ENCODE measurements at regions of chr7 and their contacts with region 1.

Region 1: GRCh38 chr7:5514440-5515035 is 90.9 kb upstream of the TNRC18 start:
- DNase-seq: no peak
- ATAC-seq: no peak
- H3K4me3 ChIP-seq: peak overlapping the region in 1 of 2 donors; percentile 98
- H3K4me3 Mint-ChIP-seq: peak overlapping the region; percentile 95 to 99 (median 99)
- H3K27ac ChIP-seq: peak overlapping the region; percentile 80
- H3K27ac Mint-ChIP-seq: peak overlapping the region; percentile 22 to 98
- H3K4me1 ChIP-seq: peaks cover 5 to 22% of the 10 kb centered on the region in 2 experiments
- H3K4me1 Mint-ChIP-seq: peaks cover 16 to 24% (median 21%) of the 10 kb centered on the region in 3 donors
- H3K27me3 ChIP-seq: no peaks in the 10 kb centered on the region
- H3K27me3 Mint-ChIP-seq: no peaks in the 10 kb centered on the region

Region 2: DNA sequence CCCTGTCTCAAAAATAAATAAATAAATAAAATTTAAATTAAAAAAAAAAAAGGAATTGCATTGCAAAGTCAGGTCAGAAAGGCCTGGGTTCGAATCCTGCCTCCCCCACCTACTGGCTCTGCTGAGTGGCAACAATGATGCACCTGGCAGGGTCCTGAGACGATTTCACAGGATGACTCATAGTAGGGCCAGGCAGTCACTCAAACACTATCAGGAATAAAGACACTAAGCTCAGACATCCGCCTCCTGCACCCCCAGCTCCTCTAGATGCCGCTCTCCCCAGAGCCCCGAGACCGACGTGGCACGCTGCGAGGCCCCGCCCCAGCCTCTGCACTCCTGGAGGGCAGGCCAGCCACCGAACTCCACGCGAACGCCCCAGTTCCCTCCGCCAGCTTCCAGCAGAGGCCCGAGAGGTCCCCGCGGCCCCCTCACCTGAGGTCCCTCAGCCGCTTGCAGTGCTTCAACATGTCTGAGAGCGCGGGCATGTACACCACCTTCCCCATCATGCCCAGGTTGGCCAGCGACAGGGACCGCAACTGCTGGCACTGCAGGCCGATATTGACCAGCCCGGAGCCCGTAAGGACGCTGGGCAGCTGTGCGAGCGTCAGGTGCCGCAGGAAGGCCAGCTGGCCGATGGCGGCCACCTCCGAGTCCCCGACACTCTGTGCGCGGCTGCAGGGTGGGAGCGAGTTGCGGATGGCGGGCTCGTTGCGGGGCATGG is 14.3 kb before region 1 on chr7:
- CTCF ChIA-PET with region 1: no interaction called
- POLR2A ChIA-PET with region 1: no interaction called
- DNase-seq: no peak
- ATAC-seq: no peak
- H3K4me3 ChIP-seq: no peak overlapping the region
- H3K4me3 Mint-ChIP-seq: no peak overlapping the region
- H3K27ac ChIP-seq: no peak overlapping the region
- H3K27ac Mint-ChIP-seq: no peak overlapping the region
- H3K4me1 ChIP-seq: peaks cover 0 to 24% of the 10 kb centered on the region in 2 experiments
- H3K4me1 Mint-ChIP-seq: peaks cover 19 to 24% (median 21%) of the 10 kb centered on the region in 3 donors
- H3K27me3 ChIP-seq: no peaks in the 10 kb centered on the region
- H3K27me3 Mint-ChIP-seq: no peaks in the 10 kb centered on the region

Region 3: DNA sequence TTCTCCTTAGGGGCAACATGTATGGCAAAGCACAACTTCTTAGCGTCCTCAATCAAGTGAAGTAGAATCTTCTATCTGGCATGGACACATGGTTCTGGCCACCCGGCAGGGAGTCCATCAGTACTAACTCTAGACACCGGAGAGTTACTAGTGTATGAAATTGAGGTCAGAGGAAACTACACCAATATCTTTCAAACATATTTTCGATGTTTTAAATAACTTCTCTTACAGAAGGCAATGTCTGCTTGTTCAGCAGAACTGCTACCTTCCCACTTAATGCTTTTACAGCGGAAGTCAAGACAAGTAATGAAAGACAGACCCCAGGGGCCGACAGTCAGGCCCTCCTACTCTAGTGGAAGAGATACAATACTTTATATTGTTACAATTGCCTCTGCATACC is 177.1 kb after region 1 on chr7:
- CTCF ChIA-PET with region 1: no interaction called
- POLR2A ChIA-PET with region 1: interaction called in 1 of 2 experiments, 11 read pairs
- DNase-seq: no peak
- ATAC-seq: no peak
- H3K4me3 ChIP-seq: no peak overlapping the region
- H3K4me3 Mint-ChIP-seq: peak overlapping the region in 2 of 3 donors; percentile 21 to 85
- H3K27ac ChIP-seq: peak overlapping the region; percentile 39
- H3K27ac Mint-ChIP-seq: peak overlapping the region; percentile 95
- H3K4me1 ChIP-seq: peaks cover 66 to 85% of the 10 kb centered on the region in 2 experiments
- H3K4me1 Mint-ChIP-seq: peaks cover 96 to 98% (median 98%) of the 10 kb centered on the region in 3 donors
- H3K27me3 ChIP-seq: no peaks in the 10 kb centered on the region
- H3K27me3 Mint-ChIP-seq: no peaks in the 10 kb centered on the region

Measured in T-cell (primary cell).